Naive thymus-derived CD4-positive, alpha-beta T cell (primary cell): ENCODE measurements at regions of chr19 and their contacts with region 1.

Region 1: DNA sequence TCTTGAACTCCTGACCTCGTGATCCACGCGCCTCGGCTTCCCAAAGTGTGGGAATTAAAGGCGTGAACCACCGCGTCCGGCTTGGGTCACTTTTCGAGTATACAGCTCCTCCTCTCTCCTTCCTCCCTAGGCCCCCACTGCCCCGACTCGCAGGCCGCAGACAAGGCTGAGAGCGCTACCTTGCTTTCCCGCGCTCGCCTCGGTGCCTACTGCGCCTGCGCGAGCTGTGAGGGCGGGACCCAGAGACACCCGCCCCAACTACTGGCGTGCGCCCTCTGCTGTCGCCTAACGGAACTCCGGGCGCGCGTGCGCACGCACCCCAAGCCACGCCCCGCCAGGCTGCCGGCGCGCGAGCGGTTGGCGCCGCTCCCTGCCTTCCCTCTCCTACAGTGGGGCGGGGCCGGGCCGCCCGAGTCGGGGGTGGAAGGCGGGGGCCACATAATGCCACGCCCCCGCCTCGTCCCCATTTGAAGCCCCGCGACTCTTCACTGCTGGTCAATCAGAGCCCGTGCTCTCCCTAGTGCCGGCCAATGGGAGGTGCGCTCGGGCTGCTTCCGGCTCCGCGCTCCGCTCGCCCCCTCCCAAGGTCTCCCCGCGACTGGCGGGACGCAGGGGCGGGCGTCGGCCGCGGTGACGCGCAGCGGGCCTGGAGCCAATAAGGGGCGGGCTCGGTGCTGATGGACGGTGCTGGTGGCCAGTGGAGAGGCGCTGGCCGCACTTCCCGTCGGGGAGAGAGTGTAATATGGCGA is at the start of gene RAB8A:
- DNase-seq: peak; percentile 98 to 100 (median 99)
- ATAC-seq: peak; percentile 93
- H3K4me3 ChIP-seq: peak within 1 kb of the TSS; percentile 90
- H3K4me3 Mint-ChIP-seq: peak within 1 kb of the TSS; percentile 93 to 99 (median 98)
- H3K27ac ChIP-seq: peak within 1 kb of the TSS; percentile 94
- H3K27ac Mint-ChIP-seq: peak within 1 kb of the TSS; percentile 89 to 99 (median 97)
- H3K4me1 ChIP-seq: peaks cover 10 to 19% of the 10 kb centered on the region in 2 donors
- H3K4me1 Mint-ChIP-seq: peaks cover 23 to 49% (median 40%) of the 10 kb centered on the region in 7 donors
- H3K27me3 ChIP-seq: no peaks in the 10 kb centered on the region
- H3K27me3 Mint-ChIP-seq: no peaks in the 10 kb centered on the region
- total RNA-seq, gene RAB8A: 64.4 to 154 (median 74.5) TPM

Region 2: GRCh38 chr19:15379083-15379995 is 732.0 kb before region 1 on chr19 and contains the start of gene AKAP8:
- CTCF ChIA-PET with region 1: no interaction called
- POLR2A ChIA-PET with region 1: no interaction called
- intact Hi-C with region 1: loop called in 1 of 2 experiments (anchors 1 kb)
- DNase-seq: peak; percentile 93 to 99 (median 98)
- ATAC-seq: peak; percentile 96
- H3K4me3 ChIP-seq: peak within 1 kb of the TSS; percentile 98
- H3K4me3 Mint-ChIP-seq: peak within 1 kb of the TSS; percentile 93 to 100 (median 99)
- H3K27ac ChIP-seq: peak within 1 kb of the TSS; percentile 97
- H3K27ac Mint-ChIP-seq: peak within 1 kb of the TSS; percentile 97 to 100 (median 100)
- H3K4me1 ChIP-seq: peaks cover 24 to 28% of the 10 kb centered on the region in 2 donors
- H3K4me1 Mint-ChIP-seq: peaks cover 13 to 46% (median 35%) of the 10 kb centered on the region in 7 donors
- H3K27me3 ChIP-seq: no peaks in the 10 kb centered on the region
- H3K27me3 Mint-ChIP-seq: no peaks in the 10 kb centered on the region
- total RNA-seq, gene AKAP8: 60.0 to 81.2 (median 80.2) TPM

Region 3: GRCh38 chr19:15944401-15944800 is 166.9 kb before region 1 on chr19:
- CTCF ChIA-PET with region 1: no interaction called
- POLR2A ChIA-PET with region 1: no interaction called
- intact Hi-C with region 1: no loop called
- DNase-seq: no peak
- ATAC-seq: no peak
- H3K4me3 ChIP-seq: no peak overlapping the region
- H3K4me3 Mint-ChIP-seq: no peak overlapping the region
- H3K27ac ChIP-seq: no peak overlapping the region
- H3K27ac Mint-ChIP-seq: no peak overlapping the region
- H3K4me1 ChIP-seq: no peaks in the 10 kb centered on the region
- H3K4me1 Mint-ChIP-seq: peaks cover 0 to 2% (median 0%) of the 10 kb centered on the region in 7 donors
- H3K27me3 ChIP-seq: peaks cover 0 to 2% of the 10 kb centered on the region in 2 donors
- H3K27me3 Mint-ChIP-seq: peaks cover 23 to 64% (median 45%) of the 10 kb centered on the region in 5 donors

Region 4: DNA sequence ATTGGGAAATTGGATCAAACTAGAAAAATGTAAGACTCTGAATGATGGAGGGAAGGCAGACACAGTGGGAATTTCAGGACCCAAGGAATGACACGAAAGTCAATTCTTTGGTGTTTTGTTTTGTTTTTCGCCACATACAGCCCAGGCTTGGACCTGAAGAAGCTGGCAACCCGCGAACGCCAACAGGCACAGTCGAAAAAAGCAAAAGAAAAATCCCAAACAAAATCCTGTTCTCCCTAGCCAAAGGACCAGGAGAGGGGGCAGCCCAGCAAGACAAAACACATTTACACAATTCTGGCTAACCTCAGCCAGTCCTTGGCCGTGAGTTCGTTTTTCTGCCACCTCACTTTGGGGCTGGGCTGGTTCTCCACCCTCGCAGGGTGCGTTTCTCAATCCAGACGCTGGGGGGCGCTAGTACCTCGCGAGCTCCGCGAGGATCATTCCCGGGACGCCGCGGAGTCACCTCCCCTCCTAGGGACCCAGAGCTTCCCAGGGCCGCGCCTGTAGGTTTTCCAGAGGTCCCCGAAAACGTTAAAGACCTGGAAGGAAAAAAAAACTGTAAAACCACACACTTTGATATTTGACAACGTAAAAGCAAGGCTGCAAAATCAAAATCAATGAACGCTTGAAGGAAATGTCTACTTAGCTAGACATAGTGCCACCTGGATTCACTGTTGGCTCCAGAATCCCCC is 69.9 kb before region 1 on chr19:
- CTCF ChIA-PET with region 1: interaction called, 9 read pairs
- POLR2A ChIA-PET with region 1: interaction called, 7 read pairs
- intact Hi-C with region 1: loop called (anchors 1 to 2 kb)
- DNase-seq: peak; percentile 47 to 85 (median 67)
- ATAC-seq: peak; percentile 90
- H3K4me3 ChIP-seq: no peak overlapping the region
- H3K4me3 Mint-ChIP-seq: peak overlapping the region; percentile 23 to 76 (median 50)
- H3K27ac ChIP-seq: no peak overlapping the region
- H3K27ac Mint-ChIP-seq: peak overlapping the region in 2 of 9 donors; percentile 15 to 49
- H3K4me1 ChIP-seq: peaks cover 0 to 7% of the 10 kb centered on the region in 2 donors
- H3K4me1 Mint-ChIP-seq: peaks cover 6 to 22% (median 15%) of the 10 kb centered on the region in 7 donors
- H3K27me3 ChIP-seq: no peaks in the 10 kb centered on the region
- H3K27me3 Mint-ChIP-seq: peaks cover 0 to 23% (median 0%) of the 10 kb centered on the region in 5 donors

Region 5: DNA sequence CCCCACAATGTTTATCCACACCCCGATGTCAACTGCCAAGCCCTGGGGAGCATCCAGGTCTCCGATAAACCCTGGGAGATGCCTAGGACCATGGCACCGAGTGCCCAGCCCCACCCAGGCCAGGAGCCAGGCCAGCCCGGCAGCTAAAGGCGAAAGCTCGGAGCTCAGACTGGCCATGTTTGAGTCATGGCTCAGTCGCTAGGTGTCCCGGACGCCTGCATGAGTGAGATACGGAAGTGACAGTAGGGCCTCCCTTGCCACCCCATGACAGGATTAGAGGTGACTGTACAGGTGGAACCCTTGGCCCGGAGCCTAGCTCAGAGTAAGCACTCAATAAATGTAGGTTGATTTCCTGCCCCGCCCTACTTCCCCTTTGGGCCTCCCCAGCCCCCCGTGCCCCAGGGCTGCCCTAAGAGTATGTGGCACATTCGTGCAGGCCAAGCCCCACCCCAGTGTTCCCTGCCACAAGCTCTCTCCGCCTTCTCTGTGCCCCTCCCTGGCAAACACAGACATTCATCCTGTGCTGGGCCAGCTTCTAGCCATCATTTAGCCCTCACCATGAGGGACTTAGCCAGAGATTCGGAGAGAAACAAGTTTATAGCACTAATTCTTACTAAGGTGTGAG is 40.9 kb before region 1 on chr19:
- CTCF ChIA-PET with region 1: interaction called, 26 read pairs
- POLR2A ChIA-PET with region 1: interaction called, 43 read pairs
- intact Hi-C with region 1: loop called (anchors 1 kb)
- DNase-seq: peak; percentile 53 to 95 (median 90)
- ATAC-seq: peak; percentile 93
- H3K4me3 ChIP-seq: peak overlapping the region; percentile 56
- H3K4me3 Mint-ChIP-seq: peak overlapping the region in 4 of 10 donors; percentile 65 to 81 (median 68)
- H3K27ac ChIP-seq: peak overlapping the region; percentile 89
- H3K27ac Mint-ChIP-seq: no peak overlapping the region
- H3K4me1 ChIP-seq: peaks cover 22 to 61% of the 10 kb centered on the region in 2 donors
- H3K4me1 Mint-ChIP-seq: peaks cover 31 to 50% (median 42%) of the 10 kb centered on the region in 7 donors
- H3K27me3 ChIP-seq: no peaks in the 10 kb centered on the region
- H3K27me3 Mint-ChIP-seq: no peaks in the 10 kb centered on the region

Region 6: GRCh38 chr19:16143399-16144245 is 32.3 kb after region 1 on chr19 and contains the start of gene HSH2D:
- CTCF ChIA-PET with region 1: interaction called, 5 read pairs
- POLR2A ChIA-PET with region 1: interaction called, 6 read pairs
- intact Hi-C with region 1: loop called (anchors 1 to 2 kb)
- DNase-seq: peak; percentile 57 to 83 (median 81)
- ATAC-seq: peak; percentile 94
- H3K4me3 ChIP-seq: peak within 1 kb of the TSS; percentile 95
- H3K4me3 Mint-ChIP-seq: peak within 1 kb of the TSS; percentile 88 to 100 (median 95)
- H3K27ac ChIP-seq: peak within 1 kb of the TSS; percentile 94
- H3K27ac Mint-ChIP-seq: peak within 1 kb of the TSS; percentile 92 to 100 (median 96)
- H3K4me1 ChIP-seq: peaks cover 12 to 26% of the 10 kb centered on the region in 2 donors
- H3K4me1 Mint-ChIP-seq: peaks cover 25 to 57% (median 31%) of the 10 kb centered on the region in 7 donors
- H3K27me3 ChIP-seq: no peaks in the 10 kb centered on the region
- H3K27me3 Mint-ChIP-seq: no peaks in the 10 kb centered on the region
- total RNA-seq, gene HSH2D: 20.0 to 60.0 (median 46.4) TPM

Region 7: GRCh38 chr19:16417660-16418596 is 306.6 kb after region 1 on chr19:
- CTCF ChIA-PET with region 1: no interaction called
- POLR2A ChIA-PET with region 1: no interaction called
- intact Hi-C with region 1: loop called in 1 of 2 experiments (anchors 1 kb)
- DNase-seq: peak; percentile 62 to 82 (median 66)
- ATAC-seq: peak; percentile 93
- H3K4me3 ChIP-seq: no peak overlapping the region
- H3K4me3 Mint-ChIP-seq: no peak overlapping the region
- H3K27ac ChIP-seq: no peak overlapping the region
- H3K27ac Mint-ChIP-seq: peak overlapping the region in 5 of 9 donors; percentile 28 to 72 (median 63)
- H3K4me1 ChIP-seq: no peaks in the 10 kb centered on the region
- H3K4me1 Mint-ChIP-seq: peaks cover 2 to 14% (median 6%) of the 10 kb centered on the region in 7 donors
- H3K27me3 ChIP-seq: no peaks in the 10 kb centered on the region
- H3K27me3 Mint-ChIP-seq: no peaks in the 10 kb centered on the region